Dorsolateral prefrontal cortex (tissue), 120 donors: ENCODE measurements at regions of chr7 and their contacts with region 1.

Region 1: GRCh38 chr7:106041140-106041717 is 70.9 kb downstream of the SYPL1 start:
- DNase-seq: peak in 2 of 10 donors; percentile 53
- H3K4me3 ChIP-seq: no peak overlapping the region
- H3K27ac ChIP-seq: no peak overlapping the region
- H3K27me3 ChIP-seq: peaks cover 0 to 3% (median 0%) of the 10 kb centered on the region in 45 donors
- CTCF ChIP-seq: peak; percentile 17 to 78 (median 64)

Region 2: DNA sequence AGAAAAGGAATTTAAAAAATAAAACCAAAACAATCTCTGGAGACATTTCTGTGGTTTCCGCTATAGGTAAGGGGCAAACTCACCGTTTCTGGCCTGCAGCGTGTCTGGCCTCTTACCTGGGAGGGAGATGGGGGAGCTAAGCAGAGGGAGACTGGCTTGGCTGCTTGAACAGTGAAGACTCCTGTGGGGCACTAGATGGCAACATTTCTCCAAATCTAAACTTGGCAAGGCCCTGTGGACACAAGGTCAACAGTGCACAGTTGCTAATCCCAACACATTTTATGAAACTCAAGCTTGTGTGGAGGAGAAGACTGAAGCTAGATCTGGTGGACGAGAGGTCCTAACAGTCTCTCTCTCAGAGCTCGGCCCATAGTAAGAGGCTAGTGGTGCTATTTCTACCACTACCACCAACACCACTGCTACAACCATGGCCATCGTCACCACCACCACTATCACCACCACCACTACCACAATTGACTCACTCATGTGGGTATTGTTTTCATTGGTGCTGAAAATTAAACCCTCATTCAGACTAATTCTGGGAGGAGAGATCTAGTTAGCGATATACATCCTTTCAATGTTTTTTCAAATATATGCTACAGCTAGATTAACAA is 106.5 kb before region 1 on chr7:
- intact Hi-C with region 1: loop called (anchors 5 kb)
- DNase-seq: peak in 1 of 10 donors; percentile 33
- H3K4me3 ChIP-seq: no peak overlapping the region
- H3K27ac ChIP-seq: peak overlapping the region in 7 of 59 donors; percentile 39 to 82 (median 71)
- H3K27me3 ChIP-seq: no peaks in the 10 kb centered on the region
- CTCF ChIP-seq: peak in 33 of 56 donors; percentile 8 to 55 (median 30)

Region 3: DNA sequence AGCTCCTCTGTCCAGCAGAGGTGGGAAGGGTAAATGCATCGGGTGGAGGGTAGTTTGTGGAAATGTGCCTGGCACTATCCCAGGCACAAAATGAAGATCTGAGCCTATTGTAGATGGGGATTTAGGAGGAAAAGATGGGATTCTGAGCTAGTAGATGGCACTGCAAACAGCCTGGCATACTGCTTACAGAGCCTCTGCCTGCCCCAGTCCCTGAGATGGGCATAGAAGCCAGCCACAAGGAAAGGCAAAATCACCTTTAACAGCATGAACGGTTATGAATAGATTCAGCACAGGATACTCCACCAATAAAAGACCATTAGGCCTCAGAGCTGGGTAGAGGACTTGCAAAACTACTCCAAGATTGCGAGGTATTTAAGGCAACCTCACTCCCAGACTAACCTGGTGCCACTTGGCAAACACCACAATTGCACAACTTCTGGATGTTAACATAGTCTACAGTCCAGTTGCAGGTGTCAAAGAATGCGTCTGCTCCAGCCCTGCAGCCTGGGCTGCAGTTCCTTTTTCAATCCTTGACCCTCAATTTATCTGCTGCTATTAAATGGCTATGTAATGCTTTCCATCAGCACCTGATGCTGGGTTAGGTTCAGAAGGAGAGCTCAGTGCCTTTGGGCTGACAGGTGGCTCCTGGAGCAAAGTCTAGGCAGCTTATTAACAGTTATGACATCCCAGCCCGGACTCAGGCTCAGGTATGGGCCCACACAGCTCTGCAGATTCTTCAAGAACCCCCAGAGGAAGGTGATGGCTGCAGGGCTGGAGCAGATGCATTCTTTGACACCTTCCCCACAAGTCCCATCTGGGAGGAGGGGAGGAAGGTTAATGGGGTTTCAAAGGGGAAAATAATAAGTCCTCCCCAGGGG is 44.1 kb before region 1 on chr7:
- intact Hi-C with region 1: no loop called
- DNase-seq: no peak
- H3K4me3 ChIP-seq: no peak overlapping the region
- H3K27ac ChIP-seq: no peak overlapping the region
- H3K27me3 ChIP-seq: no peaks in the 10 kb centered on the region
- CTCF ChIP-seq: no peak